ENCODE measurements at regions of chr18 and their contacts with region 1.

Region 1: GRCh38 chr18:35084494-35085449 is 43.6 kb downstream of the MAPRE2 start:
- DNase-seq: no peak
- ATAC-seq: no peak

Region 2: DNA sequence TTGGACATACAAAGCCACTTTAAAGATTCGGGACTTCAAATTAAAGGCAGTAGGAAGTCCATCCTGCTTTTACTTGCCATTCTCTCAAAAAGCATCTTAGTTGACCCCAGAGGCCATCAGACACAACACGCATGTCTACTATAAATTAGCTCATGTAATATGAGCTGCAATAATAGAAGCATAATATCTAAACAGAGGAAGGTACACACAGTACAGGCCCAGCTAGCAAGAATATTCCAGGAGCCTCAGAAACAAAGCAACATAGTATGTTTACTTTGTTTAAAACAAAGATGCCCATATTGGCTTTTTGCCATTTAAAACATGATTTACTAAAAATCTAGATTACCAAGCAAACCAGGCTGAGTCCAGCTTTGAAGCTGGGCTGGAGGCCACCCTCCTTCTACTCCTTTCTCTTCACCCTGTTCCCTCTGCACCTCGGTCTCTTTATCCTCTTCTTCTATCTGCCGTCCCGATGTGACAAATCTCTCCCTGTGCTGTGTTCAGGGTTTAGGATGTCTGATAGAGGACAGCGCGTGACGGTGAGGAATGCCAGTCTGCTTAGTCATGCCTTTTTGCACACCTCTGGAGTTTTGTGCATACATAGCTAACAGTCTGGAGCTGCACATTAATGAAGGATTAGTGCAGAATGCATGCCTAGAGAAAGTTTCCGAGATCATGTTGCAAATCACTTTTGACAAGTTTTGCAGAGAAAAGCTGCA is 346.4 kb before region 1 on chr18:
- intact Hi-C with region 1: no loop called
- DNase-seq: peak; percentile 22
- ATAC-seq: peak; percentile 47 to 86

Region 3: DNA sequence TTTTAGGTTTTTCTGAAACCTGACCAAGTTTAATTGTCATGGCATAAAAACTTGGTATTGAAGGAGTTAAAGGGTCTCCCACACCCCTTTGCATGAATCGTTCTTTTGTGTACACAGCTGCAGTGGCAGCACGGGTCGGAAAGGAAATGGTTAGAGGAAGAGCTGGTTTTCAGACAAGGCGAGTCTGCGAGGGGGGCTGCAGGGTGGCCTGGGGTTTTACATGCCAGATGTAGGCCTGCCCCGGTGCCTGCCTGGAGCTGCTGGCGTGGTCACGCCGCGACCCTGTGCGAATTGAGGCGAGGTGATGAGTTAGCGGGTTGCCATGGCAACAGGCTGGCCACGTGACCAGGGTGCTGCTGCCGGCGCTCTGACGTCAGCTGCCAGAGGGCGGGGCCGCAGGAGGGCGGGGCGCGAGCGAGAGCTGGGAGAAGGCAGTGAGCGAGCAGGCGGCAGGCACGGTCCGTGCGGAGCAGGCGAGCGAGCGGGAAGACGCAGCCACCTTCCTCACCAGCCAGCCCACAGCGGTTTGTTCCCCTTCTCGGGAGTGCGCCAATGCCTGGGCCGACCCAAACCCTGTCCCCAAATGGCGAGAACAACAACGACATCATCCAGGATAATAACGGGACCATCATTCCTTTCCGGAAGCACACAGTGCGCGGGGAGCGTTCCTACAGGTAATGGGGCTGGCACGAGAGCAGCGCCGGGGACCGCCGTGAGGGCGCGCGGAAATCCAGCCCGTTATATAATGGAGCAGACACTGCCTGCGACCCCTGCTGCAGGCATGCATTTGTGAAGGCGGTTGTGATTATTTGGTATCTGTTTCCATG is 43.6 kb before region 1 on chr18 and contains the start of gene MAPRE2:
- intact Hi-C with region 1: loop called in 1 of 2 experiments (anchors 5 kb)
- DNase-seq: peak; percentile 100
- ATAC-seq: peak; percentile 99
- total RNA-seq, gene MAPRE2: 67.1 to 83.4 TPM

Region 4: DNA sequence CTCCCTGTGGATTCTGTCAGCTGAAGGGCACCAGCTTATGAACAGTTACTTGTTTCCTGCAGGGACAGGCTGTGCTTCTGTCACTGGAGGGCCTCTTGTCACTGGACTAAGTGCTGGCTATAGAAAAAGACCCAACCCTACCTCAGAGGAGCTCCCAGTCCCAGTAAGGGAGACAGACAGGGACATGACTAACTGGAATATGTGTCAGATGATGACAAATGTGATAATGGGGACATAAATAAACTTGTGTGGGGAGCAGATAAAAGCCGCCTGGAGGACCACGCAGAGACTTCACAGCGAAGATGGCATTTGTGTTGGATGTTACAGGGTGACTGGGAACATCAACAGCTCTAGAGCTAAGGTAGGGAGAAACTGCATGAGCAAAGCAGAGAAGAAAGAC is 51.5 kb after region 1 on chr18:
- intact Hi-C with region 1: loop called in 1 of 2 experiments (anchors 2 kb)
- DNase-seq: no peak
- ATAC-seq: peak; percentile 68 to 76

Region 5: GRCh38 chr18:35215026-35215425 is 130.3 kb after region 1 on chr18:
- intact Hi-C with region 1: no loop called
- DNase-seq: no peak
- ATAC-seq: no peak